Activated naive CD4-positive, alpha-beta T cell treated with anti-CD3 and anti-CD28 coated beads for 36 hours (primary cell): ENCODE measurements at regions of chr22 and their contacts with region 1.

Region 1: DNA sequence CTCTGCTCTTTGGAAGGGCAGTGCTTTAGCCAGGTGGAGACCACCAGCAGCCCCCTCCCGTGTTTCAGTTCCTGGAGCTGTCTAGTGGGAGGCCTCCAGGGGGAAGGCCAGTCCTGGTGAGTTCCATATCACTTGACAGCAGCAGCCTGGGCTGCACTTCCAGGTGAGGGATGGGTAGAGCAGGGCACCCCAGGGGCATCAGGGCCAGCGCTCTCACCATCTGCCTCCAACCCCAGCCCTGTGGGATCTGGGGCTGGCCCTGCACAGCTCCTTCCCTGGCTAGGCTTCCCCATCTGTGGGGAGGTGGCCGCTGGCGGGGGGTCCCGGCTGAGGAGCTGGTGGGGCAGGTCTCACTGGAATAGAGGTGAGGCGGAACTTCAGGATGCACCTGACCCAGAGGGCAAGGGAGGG is 60.5 kb downstream of the MORC2 start:
- DNase-seq: no peak
- H3K4me3 Mint-ChIP-seq: no peak overlapping the region
- H3K27ac Mint-ChIP-seq: no peak overlapping the region
- H3K4me1 Mint-ChIP-seq: peaks cover under 1% of the 10 kb centered on the region
- H3K27me3 Mint-ChIP-seq: no peaks in the 10 kb centered on the region

Region 2: GRCh38 chr22:30920407-30920806 is 12.4 kb after region 1 on chr22:
- CTCF ChIA-PET with region 1: interaction called, 12 read pairs
- intact Hi-C with region 1: no loop called
- DNase-seq: peak; percentile 90
- H3K4me3 Mint-ChIP-seq: peak overlapping the region; percentile 56
- H3K27ac Mint-ChIP-seq: no peak overlapping the region
- H3K4me1 Mint-ChIP-seq: peaks cover 7% of the 10 kb centered on the region
- H3K27me3 Mint-ChIP-seq: no peaks in the 10 kb centered on the region